PC-9 (cell line): ENCODE measurements at regions of chr3 and their contacts with region 1.

Region 1: GRCh38 chr3:169662132-169662842 is 1.2 kb downstream of the MECOM start:
- DNase-seq: peak; percentile 75 to 93
- H3K4me3 ChIP-seq: peak overlapping the region; percentile 72
- H3K27ac ChIP-seq: peak overlapping the region; percentile 51
- H3K4me1 ChIP-seq: peaks cover 21% of the 10 kb centered on the region
- H3K27me3 ChIP-seq: no peaks in the 10 kb centered on the region
- CTCF ChIP-seq: peak; percentile 83

Region 2: DNA sequence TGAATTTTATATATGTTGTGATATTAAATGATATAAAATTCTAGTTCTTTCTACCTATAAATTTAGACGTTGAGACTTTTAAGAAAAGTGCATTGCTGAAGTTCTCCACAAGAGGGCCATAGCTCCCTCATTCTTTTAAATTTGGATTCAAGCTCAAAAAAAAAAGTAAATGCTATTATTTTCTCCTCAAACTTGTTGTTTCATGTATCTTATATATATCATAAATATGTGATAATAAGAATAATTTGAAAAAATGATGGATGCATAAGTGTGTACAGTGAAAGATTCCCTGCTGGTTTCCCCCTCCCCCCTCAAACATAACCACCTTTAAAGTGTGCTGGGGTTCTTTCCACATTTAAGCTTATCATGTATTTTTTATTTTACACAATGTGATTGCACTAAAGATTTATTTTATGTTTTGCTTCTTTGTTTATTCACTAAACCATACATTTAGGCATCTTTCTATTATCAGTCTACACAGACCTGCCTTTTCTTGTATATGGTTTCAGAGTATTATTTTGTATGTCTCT is 797.2 kb before region 1 on chr3:
- CTCF ChIA-PET with region 1: interaction called, 10 read pairs
- POLR2A ChIA-PET with region 1: no interaction called
- intact Hi-C with region 1: no loop called
- DNase-seq: peak in 1 of 2 experiments; percentile 23
- H3K4me3 ChIP-seq: no peak overlapping the region
- H3K27ac ChIP-seq: no peak overlapping the region
- H3K4me1 ChIP-seq: no peaks in the 10 kb centered on the region; the same call in 1 of the 2 replicates
- H3K27me3 ChIP-seq: no peaks in the 10 kb centered on the region
- CTCF ChIP-seq: peak; percentile 94

Region 3: DNA sequence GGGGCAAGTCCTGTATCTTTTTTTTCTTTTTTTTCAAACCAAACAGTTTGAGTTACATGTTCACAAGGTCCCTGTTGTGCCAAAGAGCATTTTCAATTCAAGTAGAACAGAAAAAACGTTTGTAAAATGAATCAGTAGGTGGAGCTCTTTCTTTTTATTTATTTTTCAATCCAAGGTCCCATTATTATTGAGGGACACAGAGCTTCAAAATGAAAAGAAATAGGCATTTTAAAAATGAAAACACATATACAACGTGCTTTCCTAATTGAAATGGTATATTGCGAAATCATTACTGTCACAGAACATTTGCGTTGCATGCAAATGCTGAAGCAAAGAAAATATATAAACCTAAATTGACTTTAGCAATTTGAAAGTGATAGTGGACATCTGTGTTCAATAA is 709.7 kb before region 1 on chr3:
- CTCF ChIA-PET with region 1: no interaction called
- POLR2A ChIA-PET with region 1: interaction called, 3 read pairs
- intact Hi-C with region 1: loop called (anchors 2 kb)
- DNase-seq: peak in 1 of 2 experiments; percentile 55
- H3K4me3 ChIP-seq: no peak overlapping the region
- H3K27ac ChIP-seq: peak overlapping the region; percentile 64
- H3K4me1 ChIP-seq: peaks cover 33% of the 10 kb centered on the region
- H3K27me3 ChIP-seq: no peaks in the 10 kb centered on the region
- CTCF ChIP-seq: peak; percentile 58; the same call in 1 of the 2 replicates

Region 4: DNA sequence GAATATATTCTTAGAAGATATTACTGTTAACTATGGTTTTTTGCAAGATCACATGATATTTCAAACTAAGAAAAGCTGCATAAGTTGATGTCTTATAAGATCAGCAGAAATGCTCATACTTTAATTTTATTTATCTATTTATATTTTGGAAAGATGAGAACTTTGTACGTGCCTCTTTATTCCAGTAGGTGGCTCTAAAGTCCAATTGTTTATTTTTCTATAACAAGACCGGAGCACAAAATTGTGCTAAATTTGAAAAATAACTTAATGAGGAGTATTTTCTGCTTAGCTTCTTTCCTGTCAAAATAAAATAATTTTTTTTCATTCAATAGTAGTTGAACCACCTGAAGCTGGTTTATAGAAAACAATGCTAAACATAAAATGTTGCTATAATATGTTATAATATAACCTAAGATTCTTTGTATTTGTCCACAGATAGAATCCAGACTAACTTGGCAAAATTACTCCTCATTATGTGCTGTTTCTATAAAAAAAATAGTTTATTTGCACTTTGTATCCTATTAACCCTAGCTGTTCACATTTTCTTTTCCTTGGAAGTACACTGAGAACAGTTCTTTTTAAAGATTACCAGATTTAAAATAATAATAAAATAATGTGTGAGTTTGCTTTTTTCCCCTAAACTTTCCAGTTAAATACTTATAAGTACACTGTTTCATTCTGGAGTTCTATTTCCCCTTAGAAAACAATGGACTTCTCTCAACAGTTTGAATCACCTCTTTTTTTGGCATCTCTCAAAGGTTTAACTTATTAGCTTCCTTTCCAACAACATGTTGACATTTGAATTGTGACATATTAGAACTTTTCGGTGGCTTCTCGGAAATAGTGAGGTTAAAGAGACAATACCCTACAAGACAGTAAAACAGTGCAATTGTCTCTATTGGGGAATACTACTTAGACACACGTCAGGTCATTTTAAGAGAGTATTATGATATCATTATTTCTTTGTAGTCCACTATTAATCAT is 528.8 kb before region 1 on chr3:
- CTCF ChIA-PET with region 1: no interaction called
- POLR2A ChIA-PET with region 1: no interaction called
- intact Hi-C with region 1: loop called (anchors 1 kb)
- DNase-seq: no peak
- H3K4me3 ChIP-seq: no peak overlapping the region
- H3K27ac ChIP-seq: 0 out of 2 replicates have a peak overlapping the region, but pooled peaks have one; percentile 13
- H3K4me1 ChIP-seq: peaks cover 19% of the 10 kb centered on the region; the same call in 1 of the 2 replicates
- H3K27me3 ChIP-seq: no peaks in the 10 kb centered on the region
- CTCF ChIP-seq: peak; percentile 82

Region 5: DNA sequence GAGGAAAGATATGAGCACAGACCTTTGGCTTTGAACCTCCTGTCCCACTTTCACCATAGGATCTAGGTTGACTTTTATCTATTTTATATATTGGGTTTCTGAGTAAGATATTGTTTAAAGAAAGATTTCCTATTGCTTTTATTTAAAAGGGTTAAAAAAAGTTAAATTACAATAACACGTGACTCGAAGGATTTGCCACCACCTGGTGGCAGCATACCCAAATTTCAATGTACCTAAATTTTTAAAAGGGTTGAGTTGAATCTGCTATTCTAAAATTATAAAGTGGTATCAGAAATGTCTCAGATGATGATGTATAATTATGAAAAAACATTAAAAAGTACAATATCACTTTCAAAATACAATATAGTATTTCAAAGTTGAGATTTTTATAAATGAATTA is 367.2 kb before region 1 on chr3:
- CTCF ChIA-PET with region 1: no interaction called
- POLR2A ChIA-PET with region 1: no interaction called
- intact Hi-C with region 1: loop called (anchors 1 kb)
- DNase-seq: no peak
- H3K4me3 ChIP-seq: no peak overlapping the region
- H3K27ac ChIP-seq: no peak overlapping the region
- H3K4me1 ChIP-seq: peaks cover 11% of the 10 kb centered on the region
- H3K27me3 ChIP-seq: no peaks in the 10 kb centered on the region
- CTCF ChIP-seq: peak; percentile 80

Region 6: DNA sequence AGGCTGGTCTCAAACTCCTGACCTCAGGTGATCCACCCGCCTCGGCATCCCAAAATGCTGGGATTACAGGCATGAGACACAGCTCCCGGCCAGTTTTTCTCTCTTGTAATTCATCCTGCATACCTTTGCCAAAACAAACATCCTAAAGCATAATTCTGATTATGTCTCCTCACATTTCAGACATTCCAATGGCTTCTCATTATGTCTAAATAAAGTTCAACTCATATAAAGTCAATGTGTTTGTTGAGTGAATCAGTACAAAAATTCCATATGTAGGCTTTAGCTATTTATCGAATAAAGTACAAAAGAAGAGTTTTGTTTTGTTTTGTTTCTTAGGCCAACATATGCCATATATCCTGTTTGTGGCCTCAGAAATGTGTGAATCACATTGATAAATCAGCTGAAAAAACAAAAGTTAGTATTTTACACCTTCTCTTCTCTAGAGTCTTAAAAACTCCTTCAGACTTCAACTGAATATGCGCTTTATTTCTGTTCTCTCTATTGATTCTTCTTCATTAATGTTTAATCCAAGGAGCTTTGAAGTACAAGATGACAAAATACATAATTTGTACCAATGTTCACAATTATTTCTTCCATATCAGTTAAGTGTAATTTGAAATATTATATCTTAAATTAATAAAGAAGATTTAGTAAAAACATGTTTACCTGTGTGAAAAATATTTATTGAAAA is 164.6 kb before region 1 on chr3:
- CTCF ChIA-PET with region 1: no interaction called
- POLR2A ChIA-PET with region 1: no interaction called
- intact Hi-C with region 1: loop called (anchors 5 kb)
- DNase-seq: peak; percentile 28 to 99
- H3K4me3 ChIP-seq: no peak overlapping the region
- H3K27ac ChIP-seq: peak overlapping the region; percentile 56
- H3K4me1 ChIP-seq: peaks cover 20% of the 10 kb centered on the region
- H3K27me3 ChIP-seq: no peaks in the 10 kb centered on the region
- CTCF ChIP-seq: no peak

Region 7: DNA sequence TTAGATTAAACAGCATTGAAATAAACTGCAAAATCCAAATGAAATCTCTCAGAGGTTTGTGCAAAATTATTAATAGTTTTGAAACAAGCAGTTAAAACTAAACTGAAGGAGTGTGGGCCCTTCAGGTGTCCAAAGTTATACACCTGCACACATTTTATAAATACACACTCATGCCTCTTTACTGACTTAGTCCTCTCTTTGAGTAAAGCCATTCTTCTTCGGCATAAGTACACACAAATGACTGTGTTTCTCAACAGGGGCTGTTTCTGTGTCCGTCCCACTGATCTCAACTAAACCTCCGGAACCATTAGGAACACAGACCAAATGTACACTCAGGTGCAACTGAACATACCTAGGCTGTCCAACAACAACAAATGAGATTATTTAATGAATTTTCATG is 17.5 kb before region 1 on chr3:
- CTCF ChIA-PET with region 1: no interaction called
- POLR2A ChIA-PET with region 1: no interaction called
- intact Hi-C with region 1: no loop called
- DNase-seq: no peak
- H3K4me3 ChIP-seq: no peak overlapping the region
- H3K27ac ChIP-seq: no peak overlapping the region
- H3K4me1 ChIP-seq: no peaks in the 10 kb centered on the region
- H3K27me3 ChIP-seq: no peaks in the 10 kb centered on the region
- CTCF ChIP-seq: no peak